Vagina (tissue), 2 donors: ENCODE measurements at regions of chr4 and their contacts with region 1.

Region 1: DNA sequence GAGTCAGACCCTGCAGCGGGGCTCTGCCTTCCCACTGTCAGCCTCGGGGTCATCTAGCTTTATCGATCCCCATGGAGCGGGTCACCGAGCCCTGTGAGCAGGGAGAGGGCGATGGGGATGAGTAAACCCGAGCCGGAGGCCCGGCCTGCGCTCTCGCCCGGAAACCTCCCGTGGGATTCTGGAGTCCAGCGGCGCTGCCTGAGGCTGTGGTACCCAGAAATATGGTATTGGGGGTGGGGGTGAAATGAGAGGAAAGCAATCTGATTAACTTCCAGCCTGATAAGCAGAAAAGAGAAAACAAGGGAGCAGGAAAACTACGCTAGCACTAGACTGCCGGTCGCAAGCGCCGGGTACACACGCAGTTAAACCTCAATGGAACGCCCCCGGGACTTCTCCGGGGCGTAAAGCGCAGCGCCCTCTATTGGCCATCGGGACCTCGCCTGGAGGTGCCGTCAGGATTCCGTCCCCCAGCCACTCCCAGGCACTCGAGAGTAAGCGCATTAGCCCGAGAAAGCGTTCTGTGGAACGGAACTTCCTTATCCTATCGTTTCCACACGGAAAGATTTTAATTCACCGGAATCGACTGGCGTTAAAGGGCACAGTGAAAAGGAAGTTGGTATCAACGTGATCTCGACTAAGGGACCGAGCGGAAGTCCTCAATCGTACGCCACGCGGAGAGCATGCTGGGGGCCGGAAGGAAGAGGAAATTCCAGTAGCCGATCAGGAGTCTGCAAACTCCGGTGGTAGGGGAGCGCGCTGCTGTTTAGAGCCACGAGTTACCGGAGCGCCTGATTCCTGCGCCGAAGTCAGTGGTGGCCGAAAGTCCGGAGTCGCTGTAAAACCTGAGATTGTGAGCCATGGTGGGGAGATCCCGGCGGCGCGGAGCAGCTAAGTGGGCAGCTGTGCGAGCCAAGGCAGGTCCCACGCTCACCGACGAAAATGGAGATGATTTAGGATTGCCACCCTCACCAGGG is at the start of gene UTP3:
- DNase-seq: peak in 1 of 2 donors; percentile 96
- H3K4me3 ChIP-seq: peak within 1 kb of the TSS; percentile 65 to 81
- H3K27ac ChIP-seq: peak within 1 kb of the TSS; percentile 82
- H3K4me1 ChIP-seq: peaks cover 35% of the 10 kb centered on the region
- H3K27me3 ChIP-seq: no peaks in the 10 kb centered on the region
- CTCF ChIP-seq: peak; percentile 72 to 90 (median 88)
- POLR2A ChIP-seq: peak in 1 of 2 donors; percentile 45
- total RNA-seq, gene UTP3: 15.7 TPM

Region 2: DNA sequence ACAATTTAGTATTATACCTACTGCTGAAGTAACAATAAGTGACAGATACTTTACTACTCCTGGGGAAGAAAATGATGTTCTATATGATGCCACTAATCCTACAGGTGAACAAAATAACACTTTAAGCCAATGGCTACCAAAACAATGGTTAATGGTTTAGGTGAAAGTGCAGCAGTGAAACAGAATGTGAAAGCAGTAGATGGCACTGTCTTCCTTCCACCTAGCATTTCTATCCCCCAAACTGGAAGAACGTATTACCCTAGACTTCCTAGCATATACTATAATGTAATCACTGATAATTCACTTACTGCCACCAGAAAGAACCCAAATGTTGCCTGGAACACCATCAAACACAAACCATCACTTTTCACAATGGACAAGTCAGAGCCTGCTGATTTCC is 372.2 kb before region 1 on chr4:
- intact Hi-C with region 1: no loop called
- DNase-seq: no peak
- H3K4me3 ChIP-seq: no peak overlapping the region
- H3K27ac ChIP-seq: no peak overlapping the region
- H3K4me1 ChIP-seq: no peaks in the 10 kb centered on the region
- H3K27me3 ChIP-seq: no peaks in the 10 kb centered on the region
- CTCF ChIP-seq: no peak
- POLR2A ChIP-seq: no peak

Region 3: GRCh38 chr4:70704331-70705145 is 16.4 kb after region 1 on chr4:
- intact Hi-C with region 1: loop called (anchors 1 kb)
- DNase-seq: no peak
- H3K4me3 ChIP-seq: peak overlapping the region; percentile 64 to 81
- H3K27ac ChIP-seq: peak overlapping the region; percentile 92
- H3K4me1 ChIP-seq: peaks cover 22% of the 10 kb centered on the region
- H3K27me3 ChIP-seq: no peaks in the 10 kb centered on the region
- CTCF ChIP-seq: no peak
- POLR2A ChIP-seq: no peak